ENCODE measurements at regions of chr17 and their contacts with region 1.

Region 1: GRCh38 chr17:8118769-8119580 is 661 bp upstream of the ALOXE3 start:
- DNase-seq: peak; percentile 75 to 92 (median 81)
- ATAC-seq: peak; percentile 60
- H3K4me3 ChIP-seq: peak overlapping the region; percentile 57
- H3K4me3 Mint-ChIP-seq: peak overlapping the region; percentile 99
- H3K27ac ChIP-seq: peak overlapping the region; percentile 7 to 50
- H3K27ac Mint-ChIP-seq: peak overlapping the region; percentile 100
- H3K4me1 ChIP-seq: peaks cover 65% of the 10 kb centered on the region
- H3K4me1 Mint-ChIP-seq: peaks cover 53% of the 10 kb centered on the region
- H3K27me3 ChIP-seq: peaks cover 45 to 53% of the 10 kb centered on the region in 2 experiments
- H3K27me3 Mint-ChIP-seq: peaks cover 66% of the 10 kb centered on the region
- CTCF ChIP-seq: peak; percentile 81

Region 2: DNA sequence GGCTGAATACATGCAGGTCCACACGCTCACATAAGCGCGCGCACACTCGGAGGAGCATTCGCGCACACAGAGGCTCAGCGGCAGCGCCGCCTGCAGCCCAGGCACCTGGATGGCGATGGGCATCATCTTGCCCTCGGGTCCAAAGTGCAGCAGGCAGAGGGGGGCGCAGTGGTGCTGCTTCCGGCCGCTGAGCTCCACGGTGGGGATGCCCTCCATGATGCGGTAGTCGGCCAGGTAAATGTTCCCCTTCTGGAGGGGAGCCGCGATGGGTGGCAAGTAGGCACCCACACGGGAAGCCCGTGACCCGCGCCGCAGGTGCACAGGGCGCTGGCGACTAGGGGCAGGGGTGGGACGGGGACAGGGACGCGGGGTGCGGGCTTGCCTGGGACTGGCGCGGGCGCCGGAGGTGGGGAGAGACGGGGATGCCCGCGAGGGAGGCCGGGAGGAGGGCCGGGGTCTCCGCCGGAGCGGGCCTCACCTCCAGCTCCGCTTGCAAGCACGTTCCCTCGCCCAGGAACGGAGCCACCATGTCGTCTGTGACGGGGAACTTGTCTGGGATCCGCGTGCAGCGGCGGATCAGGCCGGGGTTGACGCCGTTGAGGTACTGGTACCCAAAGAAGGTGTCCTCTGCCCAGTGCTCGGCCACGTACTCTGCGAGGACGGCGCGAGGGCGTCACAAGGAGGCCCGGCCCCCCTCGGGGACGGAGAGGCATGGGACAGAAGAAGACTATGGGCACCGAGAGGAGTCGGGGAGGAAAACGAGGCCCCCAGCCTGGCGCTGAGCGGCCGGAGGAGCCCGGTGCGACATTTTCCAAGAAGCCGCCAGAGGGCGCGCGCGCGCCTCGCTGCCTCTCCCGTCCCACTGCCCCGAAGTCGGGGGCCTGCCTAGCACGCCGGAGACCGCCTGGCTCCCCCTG is 39.4 kb before region 1 on chr17:
- CTCF ChIA-PET with region 1: interaction called, 22 read pairs
- POLR2A ChIA-PET with region 1: interaction called, 24 read pairs
- intact Hi-C with region 1: loop called in 1 of 2 experiments (anchors 2 kb)
- DNase-seq: peak; percentile 66 to 92 (median 76)
- ATAC-seq: peak; percentile 80
- H3K4me3 ChIP-seq: peak overlapping the region; percentile 77
- H3K4me3 Mint-ChIP-seq: peak overlapping the region; percentile 92
- H3K27ac ChIP-seq: peak overlapping the region; percentile 52 to 70
- H3K27ac Mint-ChIP-seq: peak overlapping the region; percentile 76
- H3K4me1 ChIP-seq: peaks cover 20% of the 10 kb centered on the region
- H3K4me1 Mint-ChIP-seq: peaks cover 17% of the 10 kb centered on the region
- H3K27me3 ChIP-seq: peaks cover 4 to 6% of the 10 kb centered on the region in 2 experiments
- H3K27me3 Mint-ChIP-seq: peaks cover 7% of the 10 kb centered on the region
- CTCF ChIP-seq: peak; percentile 82

Region 3: GRCh38 chr17:8156246-8156992 is 37.4 kb after region 1 on chr17:
- CTCF ChIA-PET with region 1: interaction called, 18 read pairs
- POLR2A ChIA-PET with region 1: interaction called, 49 read pairs
- intact Hi-C with region 1: loop called (anchors 2 to 5 kb)
- DNase-seq: peak; percentile 99 to 100 (median 100)
- ATAC-seq: peak; percentile 70
- H3K4me3 ChIP-seq: peak overlapping the region; percentile 86
- H3K4me3 Mint-ChIP-seq: no peak overlapping the region
- H3K27ac ChIP-seq: peak overlapping the region; percentile 99 to 100
- H3K27ac Mint-ChIP-seq: no peak overlapping the region
- H3K4me1 ChIP-seq: peaks cover 88% of the 10 kb centered on the region
- H3K4me1 Mint-ChIP-seq: peaks cover 73% of the 10 kb centered on the region
- H3K27me3 ChIP-seq: no peaks in the 10 kb centered on the region
- H3K27me3 Mint-ChIP-seq: peaks cover 3% of the 10 kb centered on the region
- CTCF ChIP-seq: no peak

Region 4: DNA sequence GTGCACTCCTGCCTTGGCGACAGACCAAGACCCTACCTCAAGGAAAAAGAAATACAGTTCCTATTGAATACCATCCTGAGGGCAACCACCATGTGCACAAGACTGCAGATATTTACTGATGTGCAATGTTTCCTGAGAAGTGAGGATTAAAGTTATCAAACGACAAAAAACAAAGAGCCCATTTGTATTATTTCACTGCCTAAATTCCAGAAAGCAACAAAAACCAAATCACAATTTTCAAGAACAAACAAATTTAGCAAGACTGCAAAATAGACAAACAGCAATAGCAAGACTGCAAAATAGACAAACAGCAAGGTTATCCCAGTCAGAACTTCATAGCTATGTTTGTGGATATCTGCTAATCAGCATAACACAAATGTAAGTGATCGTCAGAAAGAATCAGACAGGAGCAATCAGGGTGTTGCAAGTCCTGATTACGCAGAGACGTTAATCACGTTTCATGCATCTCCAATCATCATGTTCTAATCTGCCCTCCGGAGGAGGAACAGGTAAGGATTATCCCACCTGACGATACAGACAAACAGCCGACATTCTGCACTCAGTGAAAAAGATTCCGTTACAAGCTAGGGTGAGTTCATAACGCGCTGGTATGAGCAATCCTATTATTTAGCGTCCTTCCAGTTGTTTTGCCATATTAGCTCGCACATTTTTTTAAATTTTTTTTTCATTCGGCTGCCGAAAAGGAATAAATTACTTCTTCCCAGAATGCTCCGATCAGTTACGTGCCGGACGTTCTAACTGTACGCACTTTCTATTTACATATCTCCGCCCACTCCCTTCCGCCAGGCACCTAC is 54.3 kb after region 1 on chr17:
- CTCF ChIA-PET with region 1: interaction called, 6 read pairs
- POLR2A ChIA-PET with region 1: interaction called, 43 read pairs
- intact Hi-C with region 1: loop called in 1 of 2 experiments (anchors 5 kb)
- DNase-seq: peak in 13 of 14 experiments; percentile 56 to 95 (median 70)
- ATAC-seq: peak; percentile 81
- H3K4me3 ChIP-seq: peak overlapping the region; percentile 49
- H3K4me3 Mint-ChIP-seq: peak overlapping the region; percentile 90
- H3K27ac ChIP-seq: peak overlapping the region; percentile 95 to 98
- H3K27ac Mint-ChIP-seq: peak overlapping the region; percentile 99
- H3K4me1 ChIP-seq: peaks cover 48% of the 10 kb centered on the region
- H3K4me1 Mint-ChIP-seq: peaks cover 51% of the 10 kb centered on the region
- H3K27me3 ChIP-seq: no peaks in the 10 kb centered on the region
- H3K27me3 Mint-ChIP-seq: no peaks in the 10 kb centered on the region
- CTCF ChIP-seq: no peak

Region 5: DNA sequence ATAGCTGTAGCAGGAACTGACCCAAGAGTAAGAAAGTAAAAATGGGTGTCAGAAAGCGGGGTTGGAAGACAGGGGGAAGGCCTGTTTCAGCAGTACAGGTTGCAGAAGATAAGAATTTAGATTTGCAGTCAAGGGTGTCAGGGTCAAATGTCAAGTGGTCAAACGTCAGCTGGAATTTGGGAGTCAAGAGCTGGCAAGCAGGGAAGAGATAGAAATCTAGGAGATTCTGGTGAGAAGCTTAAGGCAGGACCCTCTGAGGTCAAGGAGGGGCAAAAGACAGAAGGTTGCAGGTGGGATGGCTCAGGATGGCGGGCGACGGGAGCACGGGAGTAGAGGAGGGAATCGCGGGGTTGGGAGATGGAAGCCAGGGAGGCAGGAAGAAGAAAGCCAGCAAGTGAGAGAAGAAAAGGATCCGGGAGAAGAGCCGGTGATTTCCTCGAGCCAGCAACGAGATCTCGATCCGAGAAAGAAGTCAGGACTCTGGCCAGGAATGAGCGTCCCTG is 175.9 kb after region 1 on chr17:
- CTCF ChIA-PET with region 1: interaction called, 3 read pairs
- POLR2A ChIA-PET with region 1: interaction called, 24 read pairs
- intact Hi-C with region 1: loop called in 1 of 2 experiments (anchors 5 kb)
- DNase-seq: no peak
- ATAC-seq: no peak
- H3K4me3 ChIP-seq: peak overlapping the region; percentile 72
- H3K4me3 Mint-ChIP-seq: peak overlapping the region; percentile 95
- H3K27ac ChIP-seq: peak overlapping the region; percentile 48 to 73
- H3K27ac Mint-ChIP-seq: peak overlapping the region; percentile 79
- H3K4me1 ChIP-seq: peaks cover 26% of the 10 kb centered on the region
- H3K4me1 Mint-ChIP-seq: peaks cover 39% of the 10 kb centered on the region
- H3K27me3 ChIP-seq: no peaks in the 10 kb centered on the region
- H3K27me3 Mint-ChIP-seq: no peaks in the 10 kb centered on the region
- CTCF ChIP-seq: no peak

Region 6: GRCh38 chr17:8463099-8463498 is 344.1 kb after region 1 on chr17:
- CTCF ChIA-PET with region 1: no interaction called
- POLR2A ChIA-PET with region 1: no interaction called
- intact Hi-C with region 1: no loop called
- DNase-seq: no peak
- ATAC-seq: no peak
- H3K4me3 ChIP-seq: no peak overlapping the region
- H3K4me3 Mint-ChIP-seq: no peak overlapping the region
- H3K27ac ChIP-seq: no peak overlapping the region
- H3K27ac Mint-ChIP-seq: no peak overlapping the region
- H3K4me1 ChIP-seq: peaks cover 2% of the 10 kb centered on the region
- H3K4me1 Mint-ChIP-seq: peaks cover 31% of the 10 kb centered on the region
- H3K27me3 ChIP-seq: no peaks in the 10 kb centered on the region
- H3K27me3 Mint-ChIP-seq: no peaks in the 10 kb centered on the region
- CTCF ChIP-seq: no peak